Naive thymus-derived CD4-positive, alpha-beta T cell (primary cell): ENCODE measurements at regions of chr6 and their contacts with region 1.

Region 1: DNA sequence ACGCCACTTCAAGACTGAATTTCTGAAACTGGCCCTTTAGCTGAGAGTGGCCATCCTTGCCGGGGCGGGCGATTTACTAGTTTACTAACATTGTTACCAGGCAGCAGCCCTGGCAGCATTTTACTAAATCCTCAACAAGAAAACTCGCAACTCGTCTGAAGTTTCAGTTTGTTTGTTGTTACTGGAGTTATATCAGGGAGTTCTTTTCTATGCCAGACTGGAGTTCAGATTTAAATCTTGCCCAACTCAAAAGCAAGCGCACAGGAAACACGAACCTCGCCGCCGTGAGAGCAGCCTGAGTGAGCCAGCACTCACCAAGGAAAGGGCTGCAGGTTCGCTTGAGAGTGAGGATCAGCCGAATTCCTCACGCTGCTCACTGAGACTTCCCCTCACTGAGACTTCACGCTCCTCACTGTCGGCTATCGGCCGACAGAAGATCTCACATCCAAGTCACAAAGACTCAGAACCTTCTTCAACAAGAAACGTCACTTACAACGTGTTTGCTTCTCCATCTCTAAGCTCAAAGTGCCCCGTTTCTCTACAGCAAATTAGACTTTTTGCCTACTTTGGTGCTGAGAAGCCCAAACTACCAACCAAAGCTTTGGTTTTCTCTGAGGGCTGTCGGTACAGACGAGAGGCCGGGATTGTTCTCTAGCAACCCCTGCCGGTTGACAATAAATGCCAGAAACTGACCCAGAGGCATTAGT is 78.9 kb downstream of the OLIG3 start:
- DNase-seq: peak; percentile 35 to 71 (median 64)
- ATAC-seq: peak; percentile 95
- H3K4me3 ChIP-seq: peak overlapping the region; percentile 62
- H3K4me3 Mint-ChIP-seq: peak overlapping the region; percentile 77 to 90 (median 86)
- H3K27ac ChIP-seq: peak overlapping the region; percentile 37
- H3K27ac Mint-ChIP-seq: peak overlapping the region; percentile 16 to 82 (median 76)
- H3K4me1 ChIP-seq: peaks cover 0 to 10% of the 10 kb centered on the region in 2 donors
- H3K4me1 Mint-ChIP-seq: peaks cover 7 to 13% (median 12%) of the 10 kb centered on the region in 7 donors
- H3K27me3 ChIP-seq: peaks cover 0 to 4% of the 10 kb centered on the region in 2 donors
- H3K27me3 Mint-ChIP-seq: peaks cover 0 to 37% (median 0%) of the 10 kb centered on the region in 5 donors

Region 2: GRCh38 chr6:137094411-137095008 is 320.8 kb before region 1 on chr6:
- CTCF ChIA-PET with region 1: no interaction called
- POLR2A ChIA-PET with region 1: no interaction called
- intact Hi-C with region 1: loop called (anchors 1 kb)
- DNase-seq: peak in 8 of 9 donors; percentile 17 to 56 (median 40)
- ATAC-seq: peak; percentile 80
- H3K4me3 ChIP-seq: no peak overlapping the region
- H3K4me3 Mint-ChIP-seq: peak overlapping the region in 1 of 10 donors; percentile 33
- H3K27ac ChIP-seq: no peak overlapping the region
- H3K27ac Mint-ChIP-seq: peak overlapping the region in 1 of 9 donors; percentile 11
- H3K4me1 ChIP-seq: peaks cover 0 to 3% of the 10 kb centered on the region in 2 donors
- H3K4me1 Mint-ChIP-seq: peaks cover 0 to 44% (median 0%) of the 10 kb centered on the region in 7 donors
- H3K27me3 ChIP-seq: no peaks in the 10 kb centered on the region
- H3K27me3 Mint-ChIP-seq: peaks cover 0 to 10% (median 0%) of the 10 kb centered on the region in 5 donors

Region 3: DNA sequence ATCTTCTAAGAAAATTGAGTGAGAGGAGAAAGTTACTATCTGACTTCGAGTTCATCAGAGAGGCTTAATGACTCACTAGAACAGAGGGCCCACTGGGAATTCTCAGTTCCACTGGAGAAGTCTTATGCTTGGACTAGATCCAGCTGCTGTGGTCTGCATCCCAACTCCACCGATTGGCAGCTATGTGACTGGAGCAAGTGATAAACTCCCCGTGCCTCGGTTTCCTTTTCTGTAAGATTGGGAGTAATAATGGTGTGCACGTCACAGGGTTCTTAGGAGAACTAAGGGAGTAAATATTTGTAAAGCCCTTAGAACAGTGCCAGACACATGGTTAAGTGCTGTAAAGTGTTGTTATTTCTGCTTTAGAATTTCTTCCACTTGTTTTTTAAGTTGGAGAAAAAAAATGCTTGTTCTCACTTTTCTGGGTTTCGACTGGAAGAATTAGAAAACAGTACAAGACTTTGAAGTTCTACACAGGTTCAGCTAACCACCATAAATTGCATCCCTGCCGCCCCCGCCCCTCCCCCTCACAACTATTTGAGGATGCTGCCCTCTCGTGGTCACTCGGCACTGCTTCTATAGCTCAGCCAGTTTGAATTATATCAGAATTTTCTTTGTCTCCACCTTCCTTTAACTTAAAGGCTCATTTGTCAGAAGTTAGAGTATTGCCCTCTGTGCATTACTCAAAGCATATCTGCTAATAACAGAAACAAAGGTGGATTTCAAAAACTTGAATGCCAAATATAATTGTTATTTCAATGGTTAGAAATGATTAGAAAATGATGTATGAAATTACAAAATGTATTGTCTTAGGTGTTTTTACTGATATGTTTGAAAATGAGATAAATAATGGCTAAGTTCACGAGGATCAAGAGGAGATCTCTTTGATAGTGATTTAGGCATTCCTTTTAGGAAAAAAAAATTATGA is 101.1 kb before region 1 on chr6:
- CTCF ChIA-PET with region 1: interaction called, 3 read pairs
- POLR2A ChIA-PET with region 1: no interaction called
- intact Hi-C with region 1: loop called in 1 of 2 experiments (anchors 1 kb)
- DNase-seq: peak; percentile 9 to 57 (median 51)
- ATAC-seq: peak; percentile 90
- H3K4me3 ChIP-seq: no peak overlapping the region
- H3K4me3 Mint-ChIP-seq: no peak overlapping the region
- H3K27ac ChIP-seq: no peak overlapping the region
- H3K27ac Mint-ChIP-seq: no peak overlapping the region
- H3K4me1 ChIP-seq: no peaks in the 10 kb centered on the region
- H3K4me1 Mint-ChIP-seq: peaks cover 0 to 10% (median 3%) of the 10 kb centered on the region in 7 donors
- H3K27me3 ChIP-seq: no peaks in the 10 kb centered on the region
- H3K27me3 Mint-ChIP-seq: peaks cover 0 to 22% (median 0%) of the 10 kb centered on the region in 5 donors

Region 4: DNA sequence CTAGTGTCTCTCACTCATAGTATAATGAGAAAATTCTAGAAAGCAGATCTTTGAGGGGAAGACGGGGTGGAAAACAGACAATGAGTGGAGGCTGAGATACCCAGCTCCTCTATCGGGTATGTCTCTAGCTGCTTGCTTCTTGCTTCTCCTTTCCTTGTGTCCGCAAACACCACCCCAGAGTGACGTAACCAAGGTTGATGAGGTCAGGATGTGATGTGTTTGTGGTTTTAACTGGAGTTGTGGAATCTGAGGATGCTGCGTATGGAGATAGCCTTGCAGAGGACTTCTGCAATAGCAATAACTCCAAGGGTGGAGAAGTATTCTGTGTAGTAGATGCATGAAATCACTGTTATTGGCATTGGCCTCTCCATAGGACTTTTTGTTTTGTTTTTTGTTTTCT is 63.4 kb before region 1 on chr6:
- CTCF ChIA-PET with region 1: interaction called, 109 read pairs
- POLR2A ChIA-PET with region 1: interaction called, 4 read pairs
- intact Hi-C with region 1: no loop called
- DNase-seq: no peak
- ATAC-seq: peak; percentile 87
- H3K4me3 ChIP-seq: no peak overlapping the region
- H3K4me3 Mint-ChIP-seq: no peak overlapping the region
- H3K27ac ChIP-seq: no peak overlapping the region
- H3K27ac Mint-ChIP-seq: peak overlapping the region in 2 of 9 donors; percentile 51 to 65
- H3K4me1 ChIP-seq: peaks cover 12 to 14% of the 10 kb centered on the region in 2 donors
- H3K4me1 Mint-ChIP-seq: peaks cover 6 to 21% (median 18%) of the 10 kb centered on the region in 7 donors
- H3K27me3 ChIP-seq: no peaks in the 10 kb centered on the region
- H3K27me3 Mint-ChIP-seq: peaks cover 0 to 16% (median 0%) of the 10 kb centered on the region in 5 donors

Region 5: DNA sequence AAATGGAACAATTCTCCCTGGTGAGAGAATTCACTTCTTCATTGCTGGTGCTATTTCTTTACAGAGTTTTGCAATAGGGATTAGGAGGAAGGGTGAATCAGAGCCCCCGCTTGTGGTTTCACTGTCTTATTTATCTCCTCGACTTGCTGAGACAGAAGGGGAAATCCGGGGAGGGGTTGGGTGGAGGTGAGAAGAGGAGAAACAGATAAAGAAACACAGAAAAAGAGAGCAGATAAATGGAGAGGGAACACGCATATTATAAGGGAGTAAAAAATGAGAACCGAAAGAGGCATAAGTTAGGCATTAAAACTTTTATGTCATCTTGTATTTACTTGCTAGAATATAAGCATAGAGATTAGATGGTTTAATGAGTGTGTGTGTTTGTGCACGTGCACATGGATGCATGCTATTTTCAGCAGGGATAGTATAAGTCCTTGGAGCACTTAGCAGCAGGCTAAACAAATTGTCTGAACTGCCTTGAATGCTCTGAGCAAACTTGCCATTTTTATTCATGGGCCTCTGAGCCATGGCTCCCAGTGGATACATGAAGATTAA is 26.1 kb before region 1 on chr6:
- CTCF ChIA-PET with region 1: interaction called, 5 read pairs
- POLR2A ChIA-PET with region 1: no interaction called
- intact Hi-C with region 1: loop called (anchors 1 to 2 kb)
- DNase-seq: peak in 8 of 9 donors; percentile 50 to 69 (median 64)
- ATAC-seq: peak; percentile 98
- H3K4me3 ChIP-seq: peak overlapping the region; percentile 18
- H3K4me3 Mint-ChIP-seq: peak overlapping the region; percentile 51 to 86 (median 80)
- H3K27ac ChIP-seq: peak overlapping the region; percentile 34
- H3K27ac Mint-ChIP-seq: peak overlapping the region; percentile 67 to 93 (median 83)
- H3K4me1 ChIP-seq: peaks cover 28 to 58% of the 10 kb centered on the region in 2 donors
- H3K4me1 Mint-ChIP-seq: peaks cover 43 to 78% (median 63%) of the 10 kb centered on the region in 7 donors
- H3K27me3 ChIP-seq: no peaks in the 10 kb centered on the region
- H3K27me3 Mint-ChIP-seq: no peaks in the 10 kb centered on the region

Region 6: DNA sequence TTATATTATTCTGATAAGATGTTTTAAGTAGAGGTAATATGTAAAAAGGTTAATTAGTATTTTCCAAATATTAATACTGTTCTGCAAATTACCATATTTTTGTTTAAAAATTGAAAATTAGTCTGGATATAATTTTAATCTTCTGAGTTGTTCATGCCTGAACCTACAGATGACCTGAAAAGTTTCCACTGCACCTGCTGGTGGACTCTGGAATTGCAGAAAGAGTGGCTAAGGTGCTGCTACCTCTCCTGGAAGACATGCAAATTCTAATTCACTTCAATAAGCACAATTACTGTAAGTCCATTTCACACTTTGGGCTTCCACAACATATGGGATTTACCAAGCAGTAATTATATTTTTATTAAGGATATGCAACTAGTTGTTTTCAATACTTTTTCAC is 156.6 kb after region 1 on chr6:
- CTCF ChIA-PET with region 1: no interaction called
- POLR2A ChIA-PET with region 1: no interaction called
- intact Hi-C with region 1: loop called in 1 of 2 experiments (anchors 5 kb)
- DNase-seq: peak; percentile 16 to 59 (median 38)
- ATAC-seq: peak; percentile 70
- H3K4me3 ChIP-seq: no peak overlapping the region
- H3K4me3 Mint-ChIP-seq: no peak overlapping the region
- H3K27ac ChIP-seq: no peak overlapping the region
- H3K27ac Mint-ChIP-seq: no peak overlapping the region
- H3K4me1 ChIP-seq: no peaks in the 10 kb centered on the region
- H3K4me1 Mint-ChIP-seq: peaks cover 0 to 10% (median 5%) of the 10 kb centered on the region in 7 donors
- H3K27me3 ChIP-seq: no peaks in the 10 kb centered on the region
- H3K27me3 Mint-ChIP-seq: peaks cover 0 to 65% (median 12%) of the 10 kb centered on the region in 5 donors

Region 7: GRCh38 chr6:137641474-137642077 is 226.3 kb after region 1 on chr6:
- CTCF ChIA-PET with region 1: interaction called, 5 read pairs
- POLR2A ChIA-PET with region 1: no interaction called
- intact Hi-C with region 1: loop called (anchors 1 to 5 kb)
- DNase-seq: peak; percentile 25 to 65 (median 57)
- ATAC-seq: peak; percentile 89
- H3K4me3 ChIP-seq: no peak overlapping the region
- H3K4me3 Mint-ChIP-seq: no peak overlapping the region
- H3K27ac ChIP-seq: no peak overlapping the region
- H3K27ac Mint-ChIP-seq: no peak overlapping the region
- H3K4me1 ChIP-seq: no peaks in the 10 kb centered on the region
- H3K4me1 Mint-ChIP-seq: peaks cover 0 to 17% (median 12%) of the 10 kb centered on the region in 7 donors
- H3K27me3 ChIP-seq: no peaks in the 10 kb centered on the region
- H3K27me3 Mint-ChIP-seq: peaks cover 0 to 13% (median 6%) of the 10 kb centered on the region in 5 donors